Left ventricle myocardium inferior (tissue), 1 donor: ENCODE measurements at regions of chr7 and their contacts with region 1.

Region 1: DNA sequence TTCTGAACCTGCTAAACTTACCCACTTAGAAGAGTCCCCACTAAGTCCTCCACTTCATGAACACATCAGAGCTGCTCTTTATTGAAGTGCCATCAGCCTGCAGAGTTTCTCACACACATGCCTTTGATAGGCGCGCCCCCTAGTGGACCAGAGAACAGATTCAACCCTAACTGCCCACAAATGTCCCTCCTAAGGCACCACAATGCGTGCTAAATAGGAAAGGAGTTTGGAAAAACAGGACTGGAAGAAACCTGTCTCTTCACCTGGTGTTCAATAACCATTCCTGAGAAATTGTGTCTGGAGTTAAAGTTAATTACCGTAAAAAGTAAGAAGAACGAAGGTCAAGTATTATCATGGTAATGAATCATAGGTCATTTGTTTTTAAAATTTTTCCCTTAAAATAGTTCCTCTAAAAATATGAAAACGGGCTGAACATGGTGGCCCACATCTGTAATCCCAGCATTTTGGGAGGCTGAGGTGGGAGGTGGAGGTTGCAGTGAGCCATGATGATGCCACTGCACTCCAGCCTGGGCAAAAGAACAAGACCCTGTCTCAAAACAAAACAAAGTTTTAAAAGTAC is 249.7 kb downstream of the ELMO1 start:
- DNase-seq: peak; percentile 81
- H3K4me3 ChIP-seq: no peak overlapping the region
- H3K27ac ChIP-seq: no peak overlapping the region
- H3K4me1 ChIP-seq: peaks cover 69% of the 10 kb centered on the region
- H3K27me3 ChIP-seq: no peaks in the 10 kb centered on the region
- CTCF ChIP-seq: peak; percentile 88

Region 2: GRCh38 chr7:36487756-36488336 is 711.1 kb before region 1 on chr7:
- intact Hi-C with region 1: loop called (anchors 10 kb)
- DNase-seq: no peak
- H3K4me3 ChIP-seq: no peak overlapping the region
- H3K27ac ChIP-seq: no peak overlapping the region
- H3K4me1 ChIP-seq: no peaks in the 10 kb centered on the region
- H3K27me3 ChIP-seq: peaks cover 7% of the 10 kb centered on the region
- CTCF ChIP-seq: peak; percentile 75